ENCODE measurements at regions of chr13 and their contacts with region 1.

Region 1: GRCh38 chr13:111066544-111066943 is 48.6 kb upstream of the ARHGEF7 start:
- DNase-seq: no peak
- H3K4me3 ChIP-seq: no peak overlapping the region
- H3K4me3 Mint-ChIP-seq: peak overlapping the region; percentile 27 to 75 (median 68)
- H3K27ac ChIP-seq: no peak overlapping the region
- H3K27ac Mint-ChIP-seq: peak overlapping the region in 1 of 7 donors; percentile 68
- H3K4me1 ChIP-seq: peaks cover 6% of the 10 kb centered on the region
- H3K4me1 Mint-ChIP-seq: peaks cover 2 to 14% (median 7%) of the 10 kb centered on the region in 4 donors
- H3K27me3 ChIP-seq: peaks cover 5% of the 10 kb centered on the region
- H3K27me3 Mint-ChIP-seq: peaks cover 35 to 54% of the 10 kb centered on the region in 2 donors

Region 2: DNA sequence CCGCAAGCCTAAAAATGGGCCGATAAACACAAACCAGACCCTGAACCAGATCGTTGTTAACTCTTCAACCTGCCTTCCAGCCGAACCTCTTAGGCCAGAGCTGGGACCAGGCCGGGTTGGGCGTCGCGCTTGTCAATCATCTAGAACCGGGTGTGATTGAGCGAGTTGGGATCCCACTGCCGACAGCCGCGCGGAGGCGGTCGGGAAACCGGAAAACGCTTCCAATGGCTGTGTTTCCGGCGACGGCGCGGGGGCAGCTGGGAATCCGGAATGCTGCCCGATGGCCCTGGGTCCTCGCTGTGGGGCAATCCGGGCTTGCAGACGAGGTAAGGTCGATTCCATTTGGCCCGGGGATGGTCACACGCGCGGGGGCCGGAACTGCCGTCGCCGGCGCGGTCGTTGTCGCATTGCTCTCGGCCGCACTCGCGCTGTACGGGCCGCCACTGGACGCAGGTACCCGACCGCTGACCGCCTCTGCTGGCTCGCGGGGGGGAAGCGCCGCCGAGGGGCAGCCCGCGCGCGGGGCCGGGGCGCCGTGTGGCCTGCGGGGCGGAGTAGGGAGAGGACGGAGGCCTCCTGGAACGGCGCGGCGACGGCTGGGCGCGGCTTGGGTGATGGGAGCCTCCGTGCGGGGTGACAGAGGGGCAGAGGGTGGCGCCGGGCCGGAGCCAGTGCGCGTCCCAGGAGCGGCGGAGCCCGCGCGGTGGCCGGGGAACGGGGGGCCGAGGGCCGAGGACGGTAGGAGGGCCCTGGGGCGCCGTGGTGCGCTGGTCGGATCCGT is 451.0 kb before region 1 on chr13 and contains the start of gene NAXD:
- CTCF ChIA-PET with region 1: no interaction called
- POLR2A ChIA-PET with region 1: no interaction called
- intact Hi-C with region 1: no loop called
- DNase-seq: peak; percentile 71 to 75 (median 73)
- H3K4me3 ChIP-seq: peak within 1 kb of the TSS; percentile 53 to 67
- H3K4me3 Mint-ChIP-seq: peak within 1 kb of the TSS; percentile 88 to 96 (median 94)
- H3K27ac ChIP-seq: peak within 1 kb of the TSS; percentile 47
- H3K27ac Mint-ChIP-seq: peak within 1 kb of the TSS; percentile 71 to 98 (median 93)
- H3K4me1 ChIP-seq: peaks cover 17% of the 10 kb centered on the region
- H3K4me1 Mint-ChIP-seq: peaks cover 28 to 47% (median 40%) of the 10 kb centered on the region in 4 donors
- H3K27me3 ChIP-seq: no peaks in the 10 kb centered on the region
- H3K27me3 Mint-ChIP-seq: no peaks in the 10 kb centered on the region
- total RNA-seq, gene NAXD: 32.6 to 33.4 TPM

Region 3: GRCh38 chr13:111202745-111203144 is 136.2 kb after region 1 on chr13:
- CTCF ChIA-PET with region 1: interaction called, 144 read pairs
- POLR2A ChIA-PET with region 1: no interaction called
- intact Hi-C with region 1: no loop called
- DNase-seq: peak in 4 of 5 donors; percentile 11 to 52 (median 40)
- H3K4me3 ChIP-seq: no peak overlapping the region
- H3K4me3 Mint-ChIP-seq: peak overlapping the region in 5 of 8 donors; percentile 11 to 57 (median 44)
- H3K27ac ChIP-seq: no peak overlapping the region
- H3K27ac Mint-ChIP-seq: peak overlapping the region; percentile 54 to 84 (median 77)
- H3K4me1 ChIP-seq: peaks cover 46% of the 10 kb centered on the region
- H3K4me1 Mint-ChIP-seq: peaks cover 54 to 81% (median 70%) of the 10 kb centered on the region in 4 donors
- H3K27me3 ChIP-seq: no peaks in the 10 kb centered on the region
- H3K27me3 Mint-ChIP-seq: no peaks in the 10 kb centered on the region

Region 4: GRCh38 chr13:111216166-111216960 is 149.8 kb after region 1 on chr13:
- CTCF ChIA-PET with region 1: interaction called, 144 read pairs
- POLR2A ChIA-PET with region 1: no interaction called
- intact Hi-C with region 1: loop called (anchors 1 kb)
- DNase-seq: peak in 4 of 5 donors; percentile 14 to 32 (median 23)
- H3K4me3 ChIP-seq: no peak overlapping the region
- H3K4me3 Mint-ChIP-seq: no peak overlapping the region
- H3K27ac ChIP-seq: no peak overlapping the region
- H3K27ac Mint-ChIP-seq: peak overlapping the region in 5 of 7 donors; percentile 39 to 82 (median 60)
- H3K4me1 ChIP-seq: no peaks in the 10 kb centered on the region
- H3K4me1 Mint-ChIP-seq: peaks cover 30 to 52% (median 35%) of the 10 kb centered on the region in 4 donors
- H3K27me3 ChIP-seq: no peaks in the 10 kb centered on the region
- H3K27me3 Mint-ChIP-seq: no peaks in the 10 kb centered on the region

Region 5: DNA sequence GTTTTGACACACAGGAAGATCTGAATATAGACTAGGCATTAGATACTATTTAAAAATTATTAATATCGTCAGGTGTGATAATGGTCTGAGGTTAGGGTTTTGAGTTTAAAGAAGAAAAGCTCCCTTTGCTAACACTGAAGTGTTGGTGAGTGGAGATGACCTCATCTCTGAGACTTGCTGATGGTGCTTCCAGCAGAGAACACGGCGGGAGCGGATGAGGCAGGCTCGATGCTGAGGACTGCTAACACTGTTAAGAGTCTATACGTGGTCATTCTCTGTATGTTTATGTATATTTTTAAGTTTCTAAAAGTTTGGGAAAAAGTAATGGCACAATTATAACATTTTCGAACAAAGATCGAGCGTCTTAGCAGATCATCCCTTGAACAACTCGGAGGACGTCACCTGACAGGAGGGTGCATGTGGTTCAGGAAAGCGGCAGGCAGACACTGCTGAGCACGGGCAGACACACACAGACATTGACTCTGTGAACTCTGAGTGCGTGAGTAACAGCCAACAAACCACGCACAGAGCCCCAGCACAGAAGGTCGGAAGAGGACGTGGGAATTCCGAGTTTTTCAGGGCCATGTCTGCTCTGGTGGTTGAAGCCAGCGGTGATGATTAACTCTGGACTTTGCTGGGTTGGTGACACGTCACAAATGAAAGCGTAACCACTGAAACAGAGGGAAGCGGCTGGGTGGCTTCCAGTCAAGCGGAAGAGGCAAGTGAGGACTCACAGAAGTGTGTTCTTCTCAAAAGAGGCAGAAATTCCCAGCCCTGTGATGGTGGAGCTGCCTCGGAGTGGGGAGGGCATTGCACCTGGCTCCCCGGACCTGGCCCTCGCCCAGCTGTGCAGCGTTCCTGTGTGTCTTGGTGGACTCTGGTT is 162.0 kb after region 1 on chr13:
- CTCF ChIA-PET with region 1: interaction called, 104 read pairs
- POLR2A ChIA-PET with region 1: interaction called, 4 read pairs
- intact Hi-C with region 1: loop called (anchors 1 kb)
- DNase-seq: no peak
- H3K4me3 ChIP-seq: no peak overlapping the region
- H3K4me3 Mint-ChIP-seq: no peak overlapping the region
- H3K27ac ChIP-seq: no peak overlapping the region
- H3K27ac Mint-ChIP-seq: no peak overlapping the region
- H3K4me1 ChIP-seq: no peaks in the 10 kb centered on the region
- H3K4me1 Mint-ChIP-seq: peaks cover 14 to 61% (median 39%) of the 10 kb centered on the region in 4 donors
- H3K27me3 ChIP-seq: no peaks in the 10 kb centered on the region
- H3K27me3 Mint-ChIP-seq: no peaks in the 10 kb centered on the region